ENCODE measurements at regions of chr17 and their contacts with region 1.

Region 1: GRCh38 chr17:45394913-45395568 is 37.6 kb downstream of the ARHGAP27 start:
- DNase-seq: peak in 4 of 5 donors; percentile 21 to 36 (median 28)
- H3K4me3 ChIP-seq: no peak overlapping the region
- H3K4me3 Mint-ChIP-seq: no peak overlapping the region
- H3K27ac ChIP-seq: no peak overlapping the region
- H3K27ac Mint-ChIP-seq: peak overlapping the region in 2 of 7 donors; percentile 16 to 37
- H3K4me1 ChIP-seq: no peaks in the 10 kb centered on the region
- H3K4me1 Mint-ChIP-seq: peaks cover 0 to 5% (median 1%) of the 10 kb centered on the region in 4 donors
- H3K27me3 ChIP-seq: no peaks in the 10 kb centered on the region
- H3K27me3 Mint-ChIP-seq: no peaks in the 10 kb centered on the region

Region 2: GRCh38 chr17:45410144-45411091 is 15.4 kb after region 1 on chr17:
- CTCF ChIA-PET with region 1: interaction called, 4 read pairs
- POLR2A ChIA-PET with region 1: interaction called, 29 read pairs
- intact Hi-C with region 1: no loop called
- DNase-seq: peak; percentile 51 to 69 (median 60)
- H3K4me3 ChIP-seq: peak overlapping the region; percentile 97 to 98
- H3K4me3 Mint-ChIP-seq: peak overlapping the region; percentile 99 to 100 (median 99)
- H3K27ac ChIP-seq: peak overlapping the region; percentile 91
- H3K27ac Mint-ChIP-seq: peak overlapping the region; percentile 94 to 100 (median 99)
- H3K4me1 ChIP-seq: peaks cover 52% of the 10 kb centered on the region
- H3K4me1 Mint-ChIP-seq: peaks cover 36 to 63% (median 42%) of the 10 kb centered on the region in 4 donors
- H3K27me3 ChIP-seq: no peaks in the 10 kb centered on the region
- H3K27me3 Mint-ChIP-seq: no peaks in the 10 kb centered on the region

Region 3: GRCh38 chr17:45428050-45428617 is 33.1 kb after region 1 on chr17:
- CTCF ChIA-PET with region 1: interaction called, 9 read pairs
- POLR2A ChIA-PET with region 1: no interaction called
- intact Hi-C with region 1: loop called (anchors 1 kb)
- DNase-seq: peak; percentile 60 to 84 (median 77)
- H3K4me3 ChIP-seq: no peak overlapping the region
- H3K4me3 Mint-ChIP-seq: peak overlapping the region; percentile 37 to 86 (median 68)
- H3K27ac ChIP-seq: no peak overlapping the region
- H3K27ac Mint-ChIP-seq: peak overlapping the region; percentile 17 to 91 (median 76)
- H3K4me1 ChIP-seq: peaks cover 19% of the 10 kb centered on the region
- H3K4me1 Mint-ChIP-seq: peaks cover 9 to 29% (median 23%) of the 10 kb centered on the region in 4 donors
- H3K27me3 ChIP-seq: no peaks in the 10 kb centered on the region
- H3K27me3 Mint-ChIP-seq: no peaks in the 10 kb centered on the region

Measured in CD4-positive, alpha-beta memory T cell (primary cell).